ENCODE measurements at regions of chr10 and their contacts with region 1.

Region 1: GRCh38 chr10:111745982-111746381 is 437.6 kb downstream of the GPAM start:
- DNase-seq: no peak
- H3K4me3 ChIP-seq: no peak overlapping the region
- H3K27ac ChIP-seq: no peak overlapping the region
- H3K4me1 ChIP-seq: no peaks in the 10 kb centered on the region
- H3K27me3 ChIP-seq: no peaks in the 10 kb centered on the region
- CTCF ChIP-seq: no peak
- POLR2A ChIP-seq: no peak

Region 2: GRCh38 chr10:111338805-111339204 is 407.2 kb before region 1 on chr10:
- intact Hi-C with region 1: no loop called
- DNase-seq: no peak
- H3K4me3 ChIP-seq: no peak overlapping the region
- H3K27ac ChIP-seq: no peak overlapping the region
- H3K4me1 ChIP-seq: no peaks in the 10 kb centered on the region
- H3K27me3 ChIP-seq: no peaks in the 10 kb centered on the region
- CTCF ChIP-seq: no peak
- POLR2A ChIP-seq: no peak

Region 3: DNA sequence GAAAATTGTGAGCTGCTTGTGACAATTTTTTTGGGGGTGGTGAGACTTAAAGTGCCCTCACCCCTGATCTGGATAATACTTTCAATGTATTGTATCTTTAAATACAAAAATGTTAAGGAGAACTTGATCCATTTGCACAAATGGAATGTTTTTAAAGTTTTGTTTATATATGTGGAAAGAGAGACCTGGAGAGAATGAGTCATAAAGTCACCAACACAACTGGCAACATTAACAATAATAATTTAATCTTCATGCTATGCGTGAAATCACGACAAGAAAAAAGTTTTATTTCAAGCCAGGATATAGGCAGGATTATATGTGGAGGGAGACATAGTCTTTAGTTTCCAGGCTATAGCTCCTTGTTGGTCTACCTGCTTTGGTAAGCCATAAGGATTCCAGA is 100.0 kb before region 1 on chr10:
- intact Hi-C with region 1: no loop called
- DNase-seq: no peak
- H3K4me3 ChIP-seq: no peak overlapping the region
- H3K27ac ChIP-seq: no peak overlapping the region
- H3K4me1 ChIP-seq: no peaks in the 10 kb centered on the region
- H3K27me3 ChIP-seq: no peaks in the 10 kb centered on the region
- CTCF ChIP-seq: no peak
- POLR2A ChIP-seq: no peak

Region 4: GRCh38 chr10:111756217-111757061 is 10.5 kb after region 1 on chr10:
- intact Hi-C with region 1: loop called (anchors 1 kb)
- DNase-seq: peak in 1 of 2 donors; percentile 50
- H3K4me3 ChIP-seq: no peak overlapping the region
- H3K27ac ChIP-seq: no peak overlapping the region
- H3K4me1 ChIP-seq: no peaks in the 10 kb centered on the region
- H3K27me3 ChIP-seq: peaks cover 0 to 4% of the 10 kb centered on the region in 2 donors
- CTCF ChIP-seq: peak in 1 of 3 donors; percentile 35
- POLR2A ChIP-seq: no peak

Region 5: DNA sequence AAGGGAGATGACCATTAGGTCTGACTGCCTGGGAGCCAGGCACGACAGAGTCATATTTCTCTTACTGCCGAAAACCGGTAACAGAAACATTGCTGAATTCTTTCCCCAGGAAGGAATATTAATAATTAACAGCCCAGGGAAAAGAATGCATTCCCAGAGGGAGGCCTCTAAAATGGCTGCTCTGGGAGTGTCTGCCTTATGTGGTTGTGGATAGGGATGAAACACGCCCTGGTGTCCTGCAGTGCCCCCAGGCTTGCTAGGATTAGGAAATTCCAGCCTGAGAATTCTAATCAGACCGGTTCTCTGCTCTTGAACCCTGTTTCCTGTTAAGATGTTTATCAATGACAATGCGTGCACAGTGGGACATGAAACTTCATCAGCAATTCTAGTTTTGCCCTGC is 210.9 kb after region 1 on chr10:
- intact Hi-C with region 1: no loop called
- DNase-seq: no peak
- H3K4me3 ChIP-seq: no peak overlapping the region
- H3K27ac ChIP-seq: no peak overlapping the region
- H3K4me1 ChIP-seq: no peaks in the 10 kb centered on the region
- H3K27me3 ChIP-seq: no peaks in the 10 kb centered on the region
- CTCF ChIP-seq: no peak
- POLR2A ChIP-seq: no peak

Measured in breast epithelium (tissue), 4 donors.